ENCODE measurements at regions of chrX and their contacts with region 1.

Region 1: GRCh38 chrX:74835572-74835971 is 89.7 kb downstream of the NEXMIF start:
- DNase-seq: no peak
- H3K4me3 ChIP-seq: no peak overlapping the region
- H3K27ac ChIP-seq: no peak overlapping the region
- H3K27me3 ChIP-seq: peaks cover 0 to 37% (median 3%) of the 10 kb centered on the region in 45 donors
- CTCF ChIP-seq: no peak

Region 2: DNA sequence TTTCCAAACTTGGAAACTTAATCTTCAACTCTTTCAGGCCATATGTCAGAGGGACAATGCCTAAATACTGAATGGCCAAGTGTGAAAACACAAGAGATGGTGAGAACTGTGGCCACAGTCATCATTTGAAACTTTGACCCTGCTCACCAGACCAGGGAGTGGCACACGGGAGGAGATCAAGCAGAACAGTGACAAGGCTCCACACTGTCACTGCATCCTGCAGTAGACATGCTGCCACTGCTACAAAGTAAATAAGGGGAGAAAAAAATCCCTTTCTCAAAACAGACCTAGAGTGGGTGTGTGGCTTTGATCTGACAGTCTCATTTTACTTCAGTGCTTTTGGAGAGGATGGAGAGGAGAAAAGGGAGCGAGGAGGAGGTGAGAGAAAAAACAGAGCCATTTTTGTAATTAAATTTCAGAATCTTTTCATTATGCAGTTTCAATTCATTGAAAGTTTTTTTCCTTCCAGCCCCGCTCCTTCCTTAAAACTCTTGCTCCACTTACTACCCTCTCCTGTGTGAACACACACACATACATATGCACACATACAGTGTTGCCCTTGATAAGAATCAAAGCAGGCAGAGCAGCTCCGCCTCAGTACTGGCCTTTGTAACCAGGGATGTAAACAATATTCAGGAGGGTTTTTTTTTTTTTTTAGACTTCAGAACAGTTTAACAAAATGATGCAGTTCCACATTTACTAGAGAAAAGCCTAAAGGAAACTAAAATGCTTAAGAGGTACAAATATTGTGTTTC is 55.3 kb after region 1 on chrX:
- intact Hi-C with region 1: loop called in 1 of 2 experiments (anchors 10 kb)
- DNase-seq: no peak
- H3K4me3 ChIP-seq: no peak overlapping the region
- H3K27ac ChIP-seq: no peak overlapping the region
- H3K27me3 ChIP-seq: peaks cover 0 to 48% (median 3%) of the 10 kb centered on the region in 45 donors
- CTCF ChIP-seq: no peak

Measured in dorsolateral prefrontal cortex (tissue), 120 donors.